ENCODE measurements at regions of chr1 and their contacts with region 1.

Region 1: DNA sequence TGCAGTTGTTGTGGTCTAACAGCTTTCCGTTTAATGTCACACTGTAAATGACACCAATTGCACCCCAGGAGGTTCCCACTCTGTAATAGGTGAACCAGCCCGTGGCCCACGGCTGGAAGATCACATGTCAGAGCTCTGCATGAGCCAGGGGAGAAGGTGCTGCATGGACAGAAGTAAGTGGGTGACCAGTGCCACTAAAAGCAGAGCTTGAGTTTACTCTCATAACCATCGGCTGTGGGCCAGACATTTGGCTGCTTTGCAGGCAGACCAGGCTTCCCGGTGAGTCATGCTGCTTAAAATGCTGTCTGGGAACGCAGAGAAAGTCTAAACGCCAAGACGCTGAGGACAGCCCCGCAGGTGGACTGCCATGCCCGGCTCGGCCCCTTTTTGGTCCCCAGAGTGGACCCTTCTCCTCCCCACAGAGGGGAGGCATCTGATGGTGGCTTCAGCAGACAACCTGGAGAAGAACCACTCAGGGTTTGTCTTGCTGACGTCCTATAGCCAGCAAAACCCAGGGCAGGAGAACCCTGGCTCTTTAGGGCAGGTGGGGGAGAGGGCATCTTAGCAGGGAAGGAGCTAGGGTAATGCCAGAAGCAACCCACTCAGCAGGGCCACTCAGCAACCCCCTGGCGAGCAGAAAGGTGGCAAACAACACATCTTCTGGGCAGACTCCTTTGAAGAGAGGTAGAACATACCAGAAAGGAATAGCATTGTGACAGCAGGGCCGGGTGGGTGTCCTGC is 7.3 kb downstream of the KIAA2013 start:
- DNase-seq: peak; percentile 55
- H3K27ac ChIP-seq: peak overlapping the region; percentile 84
- CTCF ChIP-seq: no peak

Region 2: GRCh38 chr1:11784993-11785769 is 133.8 kb before region 1 on chr1:
- CTCF ChIA-PET with region 1: no interaction called
- POLR2A ChIA-PET with region 1: no interaction called
- DNase-seq: peak; percentile 55
- H3K27ac ChIP-seq: peak overlapping the region; percentile 9; the same call in 1 of the 2 replicates
- CTCF ChIP-seq: peak; percentile 83

Region 3: DNA sequence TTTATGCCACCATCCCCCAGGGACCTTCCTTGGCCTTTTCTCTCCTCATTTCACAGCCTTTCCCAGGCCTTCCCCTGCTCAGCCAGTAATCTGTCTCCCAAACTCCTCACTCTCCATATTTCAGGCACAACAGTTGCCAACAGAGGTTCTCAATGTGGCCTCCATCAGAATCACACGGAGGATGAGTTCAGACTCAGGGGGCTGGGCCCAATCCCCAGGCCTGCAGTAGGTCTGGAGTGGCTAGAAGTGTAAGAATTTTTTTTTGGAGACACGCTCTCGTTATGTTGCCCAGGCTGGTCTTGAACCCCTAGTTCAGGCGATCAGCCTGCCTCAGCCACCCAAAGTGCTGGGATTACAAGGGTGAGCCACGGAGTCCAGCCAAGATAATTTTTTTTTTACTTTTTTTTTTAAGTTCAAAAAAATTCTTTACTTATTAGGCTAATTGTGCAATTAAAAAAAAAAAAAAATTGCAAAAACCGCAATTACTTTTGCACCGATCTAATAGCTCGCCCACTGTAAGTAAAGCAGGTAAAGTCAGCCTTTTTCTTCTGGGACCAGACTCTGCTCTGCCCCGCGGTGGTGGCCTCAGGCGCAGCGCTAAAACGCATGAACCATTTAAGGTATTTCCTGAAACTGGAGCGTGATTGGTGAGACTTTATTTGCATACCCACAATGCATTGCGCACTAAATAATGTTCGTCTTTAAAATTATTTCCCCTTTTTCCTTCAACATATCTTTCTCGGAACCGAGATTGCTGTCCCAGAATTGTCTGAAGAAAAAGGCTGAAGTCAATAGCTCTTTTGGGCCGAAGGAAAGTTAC is 11.5 kb before region 1 on chr1:
- CTCF ChIA-PET with region 1: interaction called, 12 read pairs
- POLR2A ChIA-PET with region 1: interaction called, 4 read pairs
- DNase-seq: peak; percentile 86
- H3K27ac ChIP-seq: peak overlapping the region; percentile 100
- CTCF ChIP-seq: peak; percentile 92

Region 4: GRCh38 chr1:12296623-12297022 is 377.7 kb after region 1 on chr1:
- CTCF ChIA-PET with region 1: no interaction called
- POLR2A ChIA-PET with region 1: no interaction called
- DNase-seq: peak; percentile 13
- H3K27ac ChIP-seq: no peak overlapping the region
- CTCF ChIP-seq: no peak